ENCODE measurements at regions of chr1 and their contacts with region 1.

Region 1: DNA sequence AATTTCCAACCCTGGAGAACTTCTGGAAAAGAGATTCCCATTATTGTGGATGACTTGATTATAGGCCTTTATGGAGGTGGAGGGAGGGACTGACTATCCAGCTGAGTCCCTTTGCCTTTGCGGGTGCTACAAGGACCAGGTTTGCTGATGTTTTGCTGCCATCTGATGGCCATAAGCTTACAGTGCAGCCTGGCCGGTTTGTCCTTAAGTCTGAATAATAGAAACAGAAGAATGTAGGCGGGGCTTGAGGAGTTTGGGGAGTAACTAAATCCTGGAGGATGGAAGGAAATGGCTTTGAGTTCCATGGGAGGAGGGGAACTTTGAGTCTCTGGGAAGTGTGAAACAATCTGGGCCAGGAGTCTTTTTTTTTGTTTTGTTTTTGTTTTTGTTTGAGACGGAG is 55.7 kb upstream of the CD1D start:
- DNase-seq: peak; percentile 98
- H3K4me3 ChIP-seq: no peak overlapping the region
- H3K27ac ChIP-seq: no peak overlapping the region
- H3K4me1 ChIP-seq: peaks cover 30% of the 10 kb centered on the region
- H3K27me3 ChIP-seq: no peaks in the 10 kb centered on the region
- CTCF ChIP-seq: peak; percentile 98

Region 2: DNA sequence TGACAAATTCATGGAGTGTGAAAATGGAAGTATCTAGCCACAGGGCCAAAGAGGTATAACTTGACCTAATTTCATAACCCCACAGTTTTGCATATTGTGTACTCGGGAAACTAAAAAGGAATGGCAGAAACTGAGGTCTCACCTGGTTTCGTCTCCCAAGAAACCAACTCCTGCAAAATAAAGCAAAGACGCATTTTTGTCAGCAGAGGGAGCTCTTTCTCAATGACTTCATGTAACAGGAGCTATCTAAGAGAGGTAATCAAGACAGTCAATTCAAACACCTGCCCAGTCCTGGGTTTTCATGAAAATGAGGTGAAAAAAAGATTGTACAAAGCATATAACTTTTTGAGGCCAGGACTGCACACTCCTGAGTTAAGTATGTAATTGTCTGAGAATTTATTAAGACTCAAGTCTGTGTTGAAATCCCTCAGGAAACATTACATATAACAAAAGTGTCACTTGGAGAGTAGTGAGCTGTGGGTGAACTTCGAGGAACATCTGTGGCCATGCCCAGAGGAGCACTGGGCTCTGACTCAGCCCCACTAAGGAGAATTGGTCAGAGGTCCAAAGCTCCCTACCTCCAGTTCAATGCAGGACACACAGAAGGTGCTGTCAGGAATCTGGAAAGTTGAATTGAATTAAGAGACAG is 544.7 kb before region 1 on chr1:
- CTCF ChIA-PET with region 1: interaction called, 15 read pairs
- POLR2A ChIA-PET with region 1: no interaction called
- intact Hi-C with region 1: loop called (anchors 2 kb)
- DNase-seq: peak; percentile 68
- H3K4me3 ChIP-seq: no peak overlapping the region
- H3K27ac ChIP-seq: no peak overlapping the region
- H3K4me1 ChIP-seq: no peaks in the 10 kb centered on the region
- H3K27me3 ChIP-seq: peaks cover 21% of the 10 kb centered on the region
- CTCF ChIP-seq: peak; percentile 86

Region 3: DNA sequence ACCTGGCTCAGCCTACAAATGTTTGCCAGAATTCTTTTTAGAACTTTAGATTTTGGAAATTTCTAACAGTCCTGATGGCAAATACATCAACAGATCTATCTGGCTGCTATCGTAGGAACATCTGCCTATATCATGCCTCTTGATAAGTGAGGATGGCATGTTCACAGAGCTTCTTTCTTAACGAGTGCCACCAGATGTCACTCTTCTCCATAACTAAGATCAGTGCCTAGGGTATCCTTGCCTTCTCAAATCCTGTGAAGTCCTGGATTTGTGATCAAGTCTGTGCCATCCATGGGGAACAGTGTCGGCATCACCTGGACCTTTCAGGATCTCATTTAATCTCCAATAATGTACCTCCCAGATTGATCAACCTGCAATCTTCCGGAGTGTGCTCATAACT is 246.9 kb before region 1 on chr1:
- CTCF ChIA-PET with region 1: interaction called, 13 read pairs
- POLR2A ChIA-PET with region 1: no interaction called
- intact Hi-C with region 1: loop called (anchors 1 kb)
- DNase-seq: peak; percentile 83
- H3K4me3 ChIP-seq: no peak overlapping the region
- H3K27ac ChIP-seq: no peak overlapping the region
- H3K4me1 ChIP-seq: no peaks in the 10 kb centered on the region
- H3K27me3 ChIP-seq: peaks cover 9% of the 10 kb centered on the region
- CTCF ChIP-seq: peak; percentile 69

Region 4: DNA sequence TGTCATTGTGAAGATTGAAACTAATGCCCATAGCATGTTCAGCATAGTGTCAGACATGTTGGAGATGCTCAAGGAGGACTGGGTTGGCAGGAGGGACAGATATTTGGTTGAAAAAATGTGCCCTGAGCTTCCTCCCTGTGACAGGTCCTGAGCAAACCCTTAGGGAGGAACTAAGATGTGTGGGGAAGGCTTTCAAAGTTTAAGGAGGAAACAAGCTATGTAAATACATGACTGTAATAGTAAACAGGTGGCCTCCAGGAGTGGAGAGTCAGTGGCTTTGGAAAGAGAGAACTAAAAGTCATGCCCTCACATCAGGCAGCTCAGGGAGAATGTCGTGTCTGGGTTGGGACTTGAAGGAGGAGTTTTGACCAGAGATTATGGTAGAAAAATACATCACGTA is 141.2 kb before region 1 on chr1:
- CTCF ChIA-PET with region 1: interaction called, 24 read pairs
- POLR2A ChIA-PET with region 1: interaction called, 4 read pairs
- intact Hi-C with region 1: no loop called
- DNase-seq: no peak
- H3K4me3 ChIP-seq: no peak overlapping the region
- H3K27ac ChIP-seq: peak overlapping the region; percentile 99
- H3K4me1 ChIP-seq: peaks cover 70% of the 10 kb centered on the region
- H3K27me3 ChIP-seq: no peaks in the 10 kb centered on the region
- CTCF ChIP-seq: no peak

Region 5: DNA sequence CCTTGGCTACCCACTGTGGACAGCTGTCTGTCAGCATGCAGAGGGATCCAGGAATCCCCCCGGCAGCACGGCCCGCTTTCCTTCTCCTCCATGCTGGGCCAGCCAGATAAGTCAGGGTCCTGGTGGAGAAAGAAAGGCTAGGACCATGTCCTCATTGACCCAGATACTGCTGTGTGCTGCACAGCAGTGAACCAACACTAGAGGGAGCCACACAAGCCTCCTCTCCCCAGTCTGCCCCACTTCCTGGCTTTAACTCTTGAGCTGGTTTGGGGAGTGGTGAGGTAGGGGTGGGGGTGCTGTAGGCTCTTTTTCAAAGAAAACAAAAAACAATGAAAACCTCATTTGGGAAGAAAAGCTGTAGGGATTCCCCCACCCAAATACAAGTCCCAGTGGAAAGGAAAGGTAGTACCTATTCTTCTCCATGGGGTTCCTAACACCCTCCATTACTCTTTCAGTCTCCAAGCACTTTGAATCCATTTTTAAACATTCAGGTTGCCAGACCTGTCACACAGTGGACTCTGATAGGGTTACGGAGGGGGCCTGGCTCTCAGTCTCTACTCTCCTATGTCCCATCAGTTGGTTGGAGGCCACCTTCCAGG is 29.2 kb before region 1 on chr1:
- CTCF ChIA-PET with region 1: interaction called, 88 read pairs
- POLR2A ChIA-PET with region 1: no interaction called
- intact Hi-C with region 1: loop called (anchors 1 kb)
- DNase-seq: peak; percentile 75
- H3K4me3 ChIP-seq: no peak overlapping the region
- H3K27ac ChIP-seq: peak overlapping the region; percentile 66
- H3K4me1 ChIP-seq: peaks cover 40% of the 10 kb centered on the region
- H3K27me3 ChIP-seq: no peaks in the 10 kb centered on the region
- CTCF ChIP-seq: peak; percentile 97